ENCODE measurements at regions of chr3 and their contacts with region 1.

Region 1: DNA sequence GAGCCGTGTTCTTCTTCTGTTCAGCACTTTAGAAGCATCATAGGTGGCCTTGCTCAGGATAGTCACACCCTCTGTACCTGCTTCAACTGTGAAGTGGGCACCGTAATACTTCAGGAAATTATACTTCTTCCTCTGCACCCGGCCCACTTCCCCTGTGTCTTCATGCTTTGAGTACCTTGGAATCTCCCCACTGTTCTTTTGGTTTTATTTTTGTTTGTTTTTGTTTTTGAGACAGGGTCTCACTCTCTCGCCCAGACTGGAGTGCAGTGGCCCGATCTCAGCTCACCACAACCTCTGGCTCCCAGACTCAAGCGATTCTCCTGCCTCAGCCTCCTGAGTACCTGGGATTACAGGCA is 1.7 kb downstream of the P2RY14 start:
- DNase-seq: no peak
- H3K4me3 ChIP-seq: no peak overlapping the region
- H3K27ac ChIP-seq: no peak overlapping the region
- H3K4me1 ChIP-seq: no peaks in the 10 kb centered on the region
- H3K27me3 ChIP-seq: peaks cover 2% of the 10 kb centered on the region
- CTCF ChIP-seq: no peak

Region 2: DNA sequence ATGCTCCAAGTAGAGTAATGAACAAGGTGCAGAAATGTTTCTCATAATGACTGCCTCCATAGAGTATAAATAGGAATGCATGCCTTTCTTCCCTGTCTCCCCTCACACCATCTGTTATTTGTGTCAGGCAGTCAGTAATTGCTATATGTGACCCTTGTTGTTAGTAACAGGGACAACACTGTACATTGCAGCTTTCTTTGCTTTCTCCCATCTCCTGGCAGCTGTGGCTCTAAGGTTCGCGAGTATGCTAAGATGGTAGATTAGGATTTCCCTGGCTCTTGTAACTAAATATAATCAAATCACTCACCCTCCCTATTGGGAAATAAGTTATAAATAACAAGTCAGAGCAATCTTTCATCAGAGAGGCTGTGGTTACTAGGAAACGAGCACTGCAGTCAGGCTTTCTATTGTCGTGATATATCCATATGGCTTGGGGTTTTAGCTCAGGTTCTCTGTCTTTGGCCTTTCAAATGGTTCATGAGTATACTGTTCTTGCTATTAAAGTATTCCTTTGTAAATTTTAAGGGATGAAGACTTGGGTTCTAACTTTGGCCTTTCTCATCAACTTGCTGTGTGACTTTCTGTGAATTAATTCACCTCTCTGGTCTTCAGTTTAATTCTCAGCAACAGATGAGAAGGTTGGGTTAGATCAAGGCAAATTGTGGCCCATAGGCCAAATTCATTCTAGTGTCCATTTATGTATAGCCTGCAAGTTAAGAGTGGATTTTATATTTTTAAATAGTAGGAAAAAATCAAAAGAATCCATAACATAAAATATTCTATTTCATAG is 363.3 kb before region 1 on chr3:
- CTCF ChIA-PET with region 1: no interaction called
- dilution Hi-C with region 1: no loop called
- in situ Hi-C with region 1: no loop called
- intact Hi-C with region 1: no loop called
- DNase-seq: no peak
- H3K4me3 ChIP-seq: no peak overlapping the region
- H3K27ac ChIP-seq: no peak overlapping the region
- H3K4me1 ChIP-seq: no peaks in the 10 kb centered on the region
- H3K27me3 ChIP-seq: no peaks in the 10 kb centered on the region
- CTCF ChIP-seq: no peak

Region 3: DNA sequence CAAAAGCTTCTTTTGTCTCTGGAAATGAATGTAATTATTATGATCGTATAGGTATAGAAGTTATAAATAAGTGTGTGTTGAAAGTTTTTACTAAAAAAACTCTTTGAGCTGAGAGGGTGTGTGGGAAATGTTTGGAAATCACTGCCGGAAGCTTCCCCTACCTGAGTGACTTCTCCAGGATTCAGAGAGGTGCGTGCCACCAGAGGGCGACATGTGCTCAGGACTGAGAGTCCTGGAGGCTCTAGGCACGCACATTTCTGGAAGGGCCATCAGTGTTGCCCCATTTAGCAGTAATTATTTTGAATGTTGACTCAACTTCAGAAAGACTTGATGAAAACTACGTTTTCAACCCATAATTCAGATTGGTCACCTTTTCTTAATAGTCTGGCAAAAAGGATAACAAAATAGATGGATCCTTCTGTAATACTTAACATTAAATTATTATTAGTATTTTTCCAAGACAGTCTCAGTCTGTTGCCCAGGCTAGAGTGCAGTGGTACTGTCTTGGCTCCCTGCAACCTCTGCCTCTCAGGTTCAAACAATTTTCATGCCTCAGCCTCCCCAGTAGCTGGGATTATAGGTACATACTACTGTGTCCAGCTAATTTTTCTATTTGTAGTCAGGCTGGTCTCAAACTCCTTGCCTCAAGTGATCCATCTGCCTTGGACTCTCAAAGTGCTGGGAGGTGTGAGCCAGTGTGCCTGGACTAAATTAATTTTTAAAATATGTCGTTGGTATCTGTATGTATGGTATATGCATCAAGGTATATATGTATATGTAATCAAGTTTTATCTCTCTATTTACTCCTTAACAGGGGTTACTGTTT is 108.2 kb before region 1 on chr3:
- CTCF ChIA-PET with region 1: interaction called, 3 read pairs
- dilution Hi-C with region 1: no loop called
- in situ Hi-C with region 1: loop called (anchors 5 kb)
- intact Hi-C with region 1: no loop called
- DNase-seq: peak; percentile 48
- H3K4me3 ChIP-seq: no peak overlapping the region
- H3K27ac ChIP-seq: no peak overlapping the region
- H3K4me1 ChIP-seq: peaks cover 2% of the 10 kb centered on the region
- H3K27me3 ChIP-seq: no peaks in the 10 kb centered on the region
- CTCF ChIP-seq: peak; percentile 81 to 94